HEK293T (cell line): ENCODE measurements at regions of chr7 and their contacts with region 1.

Region 1: DNA sequence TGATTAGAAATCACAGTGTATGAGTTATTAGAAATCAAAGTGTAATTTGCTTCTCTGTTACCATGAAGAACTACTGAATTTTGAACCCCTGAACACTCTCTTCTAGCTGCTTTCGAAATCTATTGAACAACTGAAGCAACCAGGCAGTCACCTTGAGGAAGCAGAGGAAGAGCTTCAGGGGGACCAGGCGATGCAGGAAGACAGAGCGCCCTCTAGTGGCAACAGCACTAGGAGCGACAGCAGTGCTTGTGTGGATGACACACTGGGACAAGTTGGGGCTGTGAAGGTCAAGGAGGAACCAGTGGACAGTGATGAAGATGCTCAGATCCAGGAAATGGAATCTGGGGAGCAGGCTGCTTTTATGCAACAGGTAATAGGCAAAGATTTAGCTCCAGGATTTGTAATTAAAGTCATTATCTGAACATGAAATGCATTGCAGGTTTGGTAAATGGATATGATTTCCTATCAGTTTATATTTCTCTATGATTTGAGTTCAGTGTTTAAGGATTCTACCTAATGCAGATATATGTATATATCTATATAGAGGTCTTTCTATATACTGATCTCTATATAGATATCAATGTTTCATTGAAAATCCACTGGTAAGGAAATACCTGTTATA is 170.7 kb downstream of the HDAC9 start:
- DNase-seq: peak; percentile 76

Region 2: DNA sequence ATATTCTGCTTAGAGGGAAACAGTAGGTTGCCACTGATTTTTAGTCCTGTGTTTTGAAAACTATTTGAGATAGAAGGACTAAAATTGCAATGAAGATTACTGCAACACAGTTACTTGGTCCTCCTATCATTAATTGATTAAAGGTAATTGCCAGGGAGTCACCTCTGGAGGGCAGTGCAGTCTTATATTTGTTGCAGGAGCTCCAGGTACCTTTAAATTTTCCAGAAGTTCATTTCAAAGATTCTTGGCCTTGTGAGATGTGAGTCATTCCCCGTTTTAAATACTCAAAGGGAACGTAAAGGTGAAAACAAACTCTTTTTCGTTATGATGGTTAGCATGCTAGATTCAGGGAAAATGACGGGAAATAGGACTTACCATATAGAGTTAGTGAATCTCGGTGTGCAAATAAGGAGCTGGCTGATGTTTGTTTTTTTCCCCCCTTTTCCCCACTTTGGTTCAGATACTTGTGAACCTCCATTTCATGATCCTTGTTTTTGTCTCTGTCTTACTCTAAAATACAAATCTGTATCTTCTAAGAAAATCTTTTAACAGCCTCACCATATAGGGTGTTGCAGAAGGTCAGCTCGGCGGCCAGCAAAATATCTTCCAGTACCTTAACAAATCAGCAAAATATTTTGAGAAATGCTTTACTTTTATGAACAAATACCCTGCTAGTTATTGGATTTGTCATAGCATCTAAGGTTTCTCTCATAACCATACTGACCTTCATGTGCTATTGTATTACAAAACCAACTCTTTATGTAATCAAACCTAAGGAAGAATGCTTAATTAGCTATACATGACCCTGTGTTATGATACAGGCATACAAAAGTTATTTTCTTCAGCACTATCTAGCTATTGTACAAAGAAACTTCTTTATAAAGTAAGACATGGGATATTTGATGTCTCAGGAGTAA is 313.6 kb before region 1 on chr7:
- CTCF ChIA-PET with region 1: interaction called, 10 read pairs
- POLR2A ChIA-PET with region 1: no interaction called
- DNase-seq: peak; percentile 24